AG04449 (cell line): ENCODE measurements at regions of chr18 and their contacts with region 1.

Region 1: GRCh38 chr18:48475635-48476549 is 62.9 kb upstream of the CTIF start:
- DNase-seq: peak; percentile 46
- H3K4me3 ChIP-seq: no peak overlapping the region
- CTCF ChIP-seq: peak; percentile 74

Region 2: DNA sequence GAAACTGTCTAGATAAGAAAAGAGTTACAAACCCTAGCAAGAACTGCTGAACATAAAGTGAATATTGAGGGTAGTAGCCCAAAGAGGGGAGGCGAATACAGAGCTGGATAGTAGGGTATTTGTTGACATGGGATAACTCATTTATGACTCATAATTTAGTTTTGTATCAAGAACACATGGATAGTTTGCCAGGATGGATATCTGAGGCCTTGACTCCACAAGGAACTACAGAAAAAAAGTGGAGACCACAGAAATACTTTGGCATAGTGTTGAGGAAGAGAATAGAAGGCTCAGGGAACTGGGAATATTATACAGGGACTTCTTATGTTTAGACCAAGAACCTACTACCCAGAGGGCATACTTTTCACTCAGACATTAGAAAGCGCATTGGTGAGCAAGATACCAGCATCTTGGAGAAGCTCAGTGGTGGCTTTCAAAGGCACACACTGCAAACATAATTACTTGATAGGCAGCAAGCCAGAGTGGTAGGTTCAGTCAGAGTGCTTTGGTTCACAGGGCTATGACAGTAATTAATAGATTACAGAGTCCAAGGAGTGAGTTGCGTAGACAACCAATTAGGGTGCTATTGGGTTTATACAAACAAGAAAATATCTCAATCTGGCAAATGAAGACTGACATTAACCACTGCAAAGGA is 14.8 kb before region 1 on chr18:
- CTCF ChIA-PET with region 1: interaction called, 17 read pairs
- POLR2A ChIA-PET with region 1: no interaction called
- DNase-seq: no peak
- H3K4me3 ChIP-seq: no peak overlapping the region
- CTCF ChIP-seq: no peak

Region 3: GRCh38 chr18:48545757-48546321 is 69.9 kb after region 1 on chr18:
- CTCF ChIA-PET with region 1: interaction called, 52 read pairs
- POLR2A ChIA-PET with region 1: no interaction called
- DNase-seq: no peak
- H3K4me3 ChIP-seq: peak overlapping the region; percentile 25
- CTCF ChIP-seq: no peak

Region 4: DNA sequence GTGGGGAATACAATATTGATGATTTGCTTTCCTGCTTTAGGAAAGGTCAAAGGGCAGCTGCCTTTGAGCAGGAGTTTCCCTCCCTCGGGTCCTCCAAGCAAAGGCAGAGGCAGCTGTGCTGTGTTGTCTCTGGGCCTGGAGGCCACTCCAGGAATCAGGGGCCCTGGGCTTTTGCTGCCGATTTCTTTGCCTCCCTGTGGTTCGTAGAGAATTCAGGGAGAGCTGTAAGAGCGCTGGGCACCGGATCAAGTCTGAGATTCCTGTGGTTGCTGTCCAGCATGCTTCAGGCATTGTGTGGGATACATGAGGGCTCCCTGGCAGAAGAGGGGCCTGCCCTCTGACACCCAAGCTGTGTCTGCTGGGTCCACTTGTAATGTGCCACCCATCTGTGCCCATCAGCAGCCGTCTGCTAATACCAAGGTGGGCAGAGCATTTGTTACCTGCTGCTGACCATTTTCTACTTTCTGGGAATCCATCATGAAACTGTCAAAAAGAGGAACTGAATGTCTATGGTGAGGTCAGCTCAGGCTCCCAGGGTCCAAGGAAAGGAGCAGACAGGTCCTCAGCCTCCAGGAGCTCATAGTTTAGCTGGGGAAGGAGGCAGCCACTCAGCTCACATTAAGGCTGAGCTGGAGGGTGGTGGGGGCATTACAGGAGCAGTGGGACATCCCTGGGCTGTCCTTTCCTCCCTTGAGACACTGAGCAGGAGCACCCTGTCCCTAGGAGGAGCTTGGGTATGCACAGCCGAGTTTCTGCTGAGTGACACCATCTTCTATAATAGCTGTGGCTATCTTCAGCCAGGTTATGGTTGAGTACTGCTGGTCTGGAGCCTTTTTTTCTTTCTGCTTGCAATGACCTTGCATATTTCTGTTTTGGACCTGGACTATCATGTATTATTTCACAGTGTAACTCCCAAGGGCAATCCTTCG is 131.4 kb after region 1 on chr18:
- CTCF ChIA-PET with region 1: interaction called, 15 read pairs
- POLR2A ChIA-PET with region 1: no interaction called
- DNase-seq: peak; percentile 74
- H3K4me3 ChIP-seq: no peak overlapping the region
- CTCF ChIP-seq: peak; percentile 6

Region 5: DNA sequence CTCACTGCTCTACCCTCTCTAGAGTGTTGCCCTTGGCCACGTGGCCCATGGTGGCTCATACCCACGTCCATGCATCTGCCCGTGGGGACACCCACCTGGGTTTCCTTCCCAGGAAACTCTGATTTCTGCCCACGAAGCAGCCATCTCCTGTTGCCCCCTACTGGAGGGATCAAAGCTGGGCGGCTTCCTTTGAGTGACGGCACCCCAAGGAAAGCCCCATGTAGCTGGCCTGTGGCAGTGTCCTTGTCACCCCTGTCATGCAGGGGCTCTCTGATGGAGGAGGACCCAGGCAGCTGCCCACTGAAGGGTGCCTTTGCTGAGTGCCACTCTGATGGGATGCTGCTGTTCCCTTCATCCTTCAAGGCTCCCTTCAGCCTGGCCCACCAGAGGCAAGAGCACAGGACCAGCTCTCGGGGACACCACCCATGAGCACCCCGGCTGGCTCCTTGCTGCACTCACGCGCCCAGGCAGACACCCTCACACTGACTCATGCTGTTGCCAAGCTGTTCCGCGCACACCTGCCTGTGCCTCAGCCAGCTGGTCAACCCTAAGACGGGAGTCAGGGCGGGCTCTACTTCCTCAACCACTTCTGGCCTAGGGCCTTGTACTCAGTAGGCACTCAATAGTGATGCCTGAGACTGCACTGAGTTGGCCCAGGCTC is 164.0 kb after region 1 on chr18:
- CTCF ChIA-PET with region 1: interaction called, 19 read pairs
- POLR2A ChIA-PET with region 1: no interaction called
- DNase-seq: no peak
- H3K4me3 ChIP-seq: no peak overlapping the region
- CTCF ChIP-seq: peak; percentile 39

Region 6: GRCh38 chr18:48675352-48675761 is 199.5 kb after region 1 on chr18:
- CTCF ChIA-PET with region 1: interaction called, 286 read pairs
- POLR2A ChIA-PET with region 1: no interaction called
- DNase-seq: peak; percentile 40
- H3K4me3 ChIP-seq: no peak overlapping the region
- CTCF ChIP-seq: peak; percentile 98